Activated CD4-positive, alpha-beta memory T cell treated with anti-CD3 and anti-CD28 coated beads for 36 hours (primary cell): ENCODE measurements at regions of chrX and their contacts with region 1.

Region 1: DNA sequence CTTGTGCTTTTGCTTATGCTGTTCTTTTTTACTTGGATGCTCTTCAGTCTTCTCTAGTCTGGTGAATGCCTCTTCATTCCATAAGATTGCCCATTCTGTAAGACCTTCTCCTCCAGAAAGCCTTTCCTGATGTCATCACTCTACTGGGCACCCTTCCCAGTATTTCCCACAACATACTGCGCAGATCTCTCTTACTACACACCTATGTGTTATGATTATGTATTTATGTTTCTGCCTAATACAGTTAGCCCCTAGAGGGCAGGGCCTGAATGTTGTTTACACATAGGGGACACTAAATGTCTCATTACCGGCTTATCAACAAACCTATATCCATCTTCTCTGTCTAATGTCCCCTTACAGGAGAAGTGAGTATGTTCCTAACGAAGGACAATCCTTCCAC is 21.1 kb downstream of the AIFM1 start:
- DNase-seq: no peak
- H3K4me3 Mint-ChIP-seq: no peak overlapping the region
- H3K27ac Mint-ChIP-seq: no peak overlapping the region
- H3K4me1 Mint-ChIP-seq: no peaks in the 10 kb centered on the region
- H3K27me3 Mint-ChIP-seq: no peaks in the 10 kb centered on the region

Region 2: GRCh38 chrX:130190801-130191200 is 46.3 kb after region 1 on chrX:
- CTCF ChIA-PET with region 1: interaction called, 3 read pairs
- POLR2A ChIA-PET with region 1: no interaction called
- intact Hi-C with region 1: loop called (anchors 5 kb)
- DNase-seq: no peak
- H3K4me3 Mint-ChIP-seq: no peak overlapping the region
- H3K27ac Mint-ChIP-seq: no peak overlapping the region
- H3K4me1 Mint-ChIP-seq: peaks cover 2% of the 10 kb centered on the region
- H3K27me3 Mint-ChIP-seq: no peaks in the 10 kb centered on the region